A549 (cell line): ENCODE measurements at regions of chr10 and their contacts with region 1.

Region 1: GRCh38 chr10:70363971-70364771 is 18.3 kb downstream of the LRRC20 start:
- DNase-seq: peak; percentile 80 to 88
- ATAC-seq: peak; percentile 99
- H3K4me3 ChIP-seq: no peak overlapping the region
- H3K27ac ChIP-seq: peak overlapping the region; percentile 66 to 86
- H3K4me1 ChIP-seq: peaks cover 19% of the 10 kb centered on the region
- CTCF ChIP-seq: peak; percentile 88
- EP300 ChIP-seq: no peak
- POLR2A ChIP-seq: no peak
- RAD21 ChIP-seq: peak; percentile 97

Region 2: GRCh38 chr10:70146489-70147258 is 217.5 kb before region 1 on chr10 and contains the start of gene TYSND1:
- CTCF ChIA-PET with region 1: interaction called, 20 read pairs
- POLR2A ChIA-PET with region 1: interaction called, 4 read pairs
- DNase-seq: peak; percentile 98 to 99
- ATAC-seq: peak; percentile 80 to 89
- H3K4me3 ChIP-seq: peak within 1 kb of the TSS; percentile 79
- H3K27ac ChIP-seq: peak within 1 kb of the TSS; percentile 95 to 96
- H3K4me1 ChIP-seq: peaks cover 18% of the 10 kb centered on the region
- CTCF ChIP-seq: peak; percentile 64
- EP300 ChIP-seq: no peak
- POLR2A ChIP-seq: peak; percentile 89
- RAD21 ChIP-seq: peak; percentile 55 to 73
- polyA plus RNA-seq, gene TYSND1: 10.9 and 12.6 TPM in 2 replicates

Region 3: GRCh38 chr10:70260259-70260658 is 103.9 kb before region 1 on chr10:
- CTCF ChIA-PET with region 1: interaction called, 33 read pairs
- POLR2A ChIA-PET with region 1: no interaction called
- DNase-seq: no peak
- ATAC-seq: no peak
- H3K4me3 ChIP-seq: no peak overlapping the region
- H3K27ac ChIP-seq: no peak overlapping the region
- H3K4me1 ChIP-seq: no peaks in the 10 kb centered on the region
- CTCF ChIP-seq: no peak
- EP300 ChIP-seq: no peak
- POLR2A ChIP-seq: no peak
- RAD21 ChIP-seq: no peak

Region 4: DNA sequence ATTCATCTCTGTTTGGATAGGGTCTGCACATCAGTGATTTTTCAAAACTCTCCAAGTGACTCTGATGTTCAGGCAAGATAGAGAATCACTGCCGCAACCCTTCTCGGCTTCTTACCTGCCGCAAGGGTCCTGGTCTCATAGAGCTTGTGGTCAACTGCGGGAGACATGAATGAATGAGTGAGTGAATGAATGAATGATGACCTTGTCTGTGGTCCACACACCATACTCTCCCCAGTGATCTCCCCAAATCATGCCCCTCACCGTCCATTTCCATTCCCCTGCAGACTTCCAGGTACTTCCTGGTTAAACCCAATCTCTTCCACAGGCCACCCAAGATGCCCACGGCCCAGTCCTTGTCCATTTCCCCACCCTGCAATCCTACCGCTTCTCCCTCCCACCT is 74.4 kb before region 1 on chr10:
- CTCF ChIA-PET with region 1: interaction called, 10 read pairs
- POLR2A ChIA-PET with region 1: no interaction called
- DNase-seq: no peak
- ATAC-seq: no peak
- H3K4me3 ChIP-seq: no peak overlapping the region
- H3K27ac ChIP-seq: no peak overlapping the region; a peak in 1 of 6 replicates
- H3K4me1 ChIP-seq: peaks cover 4% of the 10 kb centered on the region; the same call in 1 of the 3 replicates
- CTCF ChIP-seq: no peak
- EP300 ChIP-seq: no peak
- POLR2A ChIP-seq: no peak
- RAD21 ChIP-seq: no peak

Region 5: DNA sequence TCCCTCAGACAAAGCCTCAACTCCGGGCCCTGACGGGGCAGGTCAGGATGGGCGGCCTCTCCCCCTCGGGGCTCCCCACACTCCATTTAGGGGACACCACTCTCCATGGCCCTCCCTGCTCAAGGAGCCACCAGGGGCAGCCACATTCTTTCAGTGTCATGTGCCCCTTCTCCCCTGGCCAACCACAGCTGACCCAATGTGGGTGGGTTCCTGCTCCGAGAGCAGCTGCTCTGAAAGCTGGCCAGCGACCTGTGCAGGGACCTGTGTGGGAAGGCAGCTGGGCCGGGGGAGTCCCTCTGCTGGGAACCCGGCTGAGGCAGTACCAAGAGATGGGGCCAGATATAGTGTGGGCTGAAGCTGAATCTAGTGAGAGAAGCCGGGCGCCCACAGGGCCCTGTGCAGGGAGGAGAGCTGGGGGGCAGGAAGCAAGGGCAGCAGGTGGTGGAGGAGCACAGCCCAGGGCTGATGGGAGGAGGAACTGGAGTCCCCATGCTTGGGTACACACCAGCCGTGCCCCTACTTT is 39.8 kb before region 1 on chr10:
- CTCF ChIA-PET with region 1: interaction called, 17 read pairs
- POLR2A ChIA-PET with region 1: no interaction called
- DNase-seq: no peak
- ATAC-seq: peak in 1 of 2 experiments; percentile 21; a peak in 1 of 6 replicates
- H3K4me3 ChIP-seq: no peak overlapping the region
- H3K27ac ChIP-seq: no peak overlapping the region
- H3K4me1 ChIP-seq: peaks cover 7% of the 10 kb centered on the region; the same call in 1 of the 3 replicates
- CTCF ChIP-seq: no peak
- EP300 ChIP-seq: no peak
- POLR2A ChIP-seq: no peak
- RAD21 ChIP-seq: no peak

Region 6: DNA sequence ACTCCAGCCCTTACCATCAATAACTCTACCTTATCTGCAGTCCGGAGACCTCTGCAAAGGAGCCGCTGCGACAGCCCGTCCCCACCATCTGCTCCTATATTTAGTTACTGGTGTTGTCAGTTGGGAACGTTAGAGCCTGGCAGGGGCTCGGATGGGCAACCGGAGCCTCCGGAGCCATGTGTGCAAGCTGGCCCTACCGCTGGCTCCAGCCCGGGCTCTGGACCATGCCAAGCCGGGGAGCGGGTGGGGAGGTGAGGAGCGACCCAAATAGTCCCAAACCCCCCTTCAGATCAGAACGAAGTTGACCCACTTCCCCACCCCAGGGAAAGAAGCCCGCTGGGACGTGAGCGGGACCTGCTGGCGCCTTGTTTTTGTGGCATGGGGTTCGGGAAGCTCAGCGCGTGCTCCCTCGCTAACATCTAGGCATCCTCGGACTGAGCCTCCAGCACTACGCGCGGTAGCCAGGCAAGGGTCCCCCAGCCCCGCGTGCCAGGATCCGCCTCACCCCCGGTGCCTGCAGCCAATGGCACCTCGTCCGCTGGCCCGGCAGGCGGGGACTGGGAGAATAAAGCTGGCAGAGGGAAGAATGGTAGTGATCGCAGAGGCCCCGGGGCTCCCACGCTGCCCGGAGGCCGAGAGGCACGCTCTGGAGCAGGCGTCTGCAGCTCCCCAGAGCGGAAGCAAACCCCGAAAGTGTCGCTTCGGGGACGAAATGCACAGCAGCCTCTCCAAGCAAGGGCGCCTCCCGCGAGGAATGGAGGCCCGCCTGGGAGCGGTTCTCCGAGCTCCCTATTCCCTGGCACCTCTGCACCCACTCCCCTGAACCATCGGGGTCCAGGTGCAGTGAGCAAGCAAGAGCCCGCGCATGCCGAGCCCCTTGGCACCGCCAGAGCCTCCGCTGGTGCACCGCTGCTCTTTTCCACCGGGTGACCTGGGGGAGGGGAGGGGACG is 17.6 kb after region 1 on chr10:
- CTCF ChIA-PET with region 1: interaction called, 143 read pairs
- POLR2A ChIA-PET with region 1: no interaction called
- DNase-seq: peak; percentile 25 to 59
- ATAC-seq: peak; percentile 44 to 56
- H3K4me3 ChIP-seq: peak overlapping the region; percentile 72
- H3K27ac ChIP-seq: peak overlapping the region; percentile 80 to 91
- H3K4me1 ChIP-seq: peaks cover 29% of the 10 kb centered on the region
- CTCF ChIP-seq: no peak
- EP300 ChIP-seq: no peak
- POLR2A ChIP-seq: no peak
- RAD21 ChIP-seq: no peak

Region 7: DNA sequence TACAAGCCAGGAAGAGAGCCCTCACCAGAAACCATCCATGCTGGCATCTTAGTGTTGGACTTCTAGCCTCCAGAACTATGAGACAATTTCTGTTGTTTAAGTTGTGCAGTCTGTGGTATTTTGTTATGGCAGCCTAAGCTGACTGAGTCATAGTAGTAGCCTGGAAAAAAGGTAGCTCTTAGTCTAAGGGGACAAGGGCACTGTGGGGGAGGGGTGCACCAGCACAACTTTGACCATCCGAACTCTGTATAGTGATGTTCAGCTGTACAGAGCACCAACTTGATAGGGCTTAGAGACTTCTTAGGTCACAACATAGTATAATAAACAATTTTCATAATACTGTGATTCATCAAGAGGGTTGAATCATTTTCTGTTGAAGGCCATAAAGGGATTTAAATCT is 54.1 kb after region 1 on chr10:
- CTCF ChIA-PET with region 1: no interaction called
- POLR2A ChIA-PET with region 1: no interaction called
- DNase-seq: peak in 1 of 2 experiments; percentile 10
- ATAC-seq: peak; percentile 56 to 66
- H3K4me3 ChIP-seq: no peak overlapping the region
- H3K27ac ChIP-seq: no peak overlapping the region
- H3K4me1 ChIP-seq: peaks cover 14% of the 10 kb centered on the region
- CTCF ChIP-seq: no peak
- EP300 ChIP-seq: no peak
- POLR2A ChIP-seq: no peak
- RAD21 ChIP-seq: no peak

Region 8: DNA sequence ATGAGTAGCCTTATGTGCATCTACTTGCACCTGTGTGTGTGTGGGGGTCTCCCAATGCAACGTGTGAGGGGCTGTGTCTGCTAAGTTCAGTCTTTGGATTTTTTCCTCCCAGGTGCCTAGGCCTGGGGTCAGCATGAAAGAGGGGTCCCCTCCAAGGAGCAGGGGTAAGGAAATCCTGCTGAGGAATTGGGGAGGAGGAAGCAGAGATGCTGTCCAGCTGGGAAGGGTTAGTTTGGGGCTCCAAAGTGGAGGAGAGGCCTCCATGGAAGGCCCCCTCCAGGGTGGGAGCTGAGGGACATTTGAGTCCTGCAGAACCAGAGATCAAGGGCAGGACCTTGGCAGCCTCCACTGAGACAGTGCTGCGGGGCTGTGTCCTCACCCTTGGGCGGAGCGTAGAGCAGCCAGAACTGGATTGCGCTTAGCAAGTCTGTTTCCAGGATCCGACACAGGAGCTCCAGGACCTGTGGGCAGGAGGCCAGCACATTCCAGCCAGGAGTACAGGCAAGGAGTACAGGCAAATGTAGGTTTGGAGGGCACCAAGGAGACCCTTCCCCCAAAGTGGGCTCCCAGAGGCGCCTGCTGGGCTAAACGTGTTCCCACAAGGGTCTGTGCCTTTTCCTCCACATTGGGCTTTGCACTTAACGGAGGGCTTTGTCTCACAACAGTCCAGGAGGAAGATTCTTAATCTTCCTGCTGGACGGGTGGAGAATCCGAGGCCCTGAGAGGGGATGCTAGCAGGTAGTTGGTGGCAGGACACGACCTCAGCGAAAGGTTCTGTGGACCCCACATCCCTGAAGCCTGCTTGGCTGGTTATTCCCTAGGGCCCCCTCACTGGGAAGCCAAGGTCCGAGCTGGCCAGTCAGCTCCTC is 410.9 kb after region 1 on chr10:
- CTCF ChIA-PET with region 1: no interaction called
- POLR2A ChIA-PET with region 1: no interaction called
- DNase-seq: no peak
- ATAC-seq: no peak; a peak in 1 of 6 replicates
- H3K4me3 ChIP-seq: no peak overlapping the region
- H3K27ac ChIP-seq: no peak overlapping the region
- H3K4me1 ChIP-seq: no peaks in the 10 kb centered on the region
- CTCF ChIP-seq: no peak
- EP300 ChIP-seq: no peak
- POLR2A ChIP-seq: no peak
- RAD21 ChIP-seq: no peak